Transverse colon (tissue), 4 donors: ENCODE measurements at regions of chr5 and their contacts with region 1.

Region 1: DNA sequence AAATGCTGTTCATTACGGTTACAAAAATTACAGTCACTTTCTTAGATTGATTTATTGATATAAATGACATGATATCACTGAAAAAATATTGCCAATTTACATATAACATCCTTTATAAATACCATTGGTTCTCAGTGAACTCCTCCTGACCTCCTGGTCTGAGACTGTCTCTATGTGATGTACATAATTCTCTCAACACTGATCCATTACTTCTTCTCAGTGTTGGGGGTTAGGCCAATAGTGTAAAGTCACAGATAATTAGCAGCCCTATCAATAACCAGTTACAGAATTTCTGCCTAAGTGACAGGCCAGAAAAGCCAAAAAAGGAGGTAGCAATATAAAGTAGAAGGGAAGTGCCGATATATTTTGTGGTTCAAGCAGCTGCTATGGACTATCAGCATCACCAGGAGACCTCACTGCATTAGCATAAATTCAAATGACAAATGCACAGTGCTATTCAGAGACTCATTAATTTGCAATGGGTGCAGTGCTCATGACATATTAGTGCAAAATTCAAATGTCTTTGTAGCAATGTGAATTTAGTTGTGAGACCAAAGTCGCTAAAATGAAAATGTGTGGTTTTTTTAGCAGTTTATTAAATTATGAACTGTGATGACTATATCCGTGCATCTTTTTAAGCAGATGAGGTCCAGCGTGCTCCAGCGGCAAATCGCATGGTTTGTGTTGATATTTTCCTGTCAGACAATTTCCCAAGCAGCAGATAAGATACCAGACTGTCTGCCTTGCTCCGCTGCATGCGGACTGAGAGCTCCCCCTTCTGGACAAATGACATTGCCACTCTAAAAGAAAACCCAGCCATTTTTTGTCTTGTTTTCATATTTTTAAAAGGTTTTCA is 144.6 kb downstream of the CETN3 start:
- DNase-seq: peak; percentile 58
- H3K4me3 ChIP-seq: no peak overlapping the region
- H3K27ac ChIP-seq: no peak overlapping the region
- H3K4me1 ChIP-seq: no peaks in the 10 kb centered on the region
- H3K27me3 ChIP-seq: no peaks in the 10 kb centered on the region
- CTCF ChIP-seq: peak; percentile 78 to 93 (median 86)
- EP300 ChIP-seq: no peak
- POLR2A ChIP-seq: no peak

Region 2: DNA sequence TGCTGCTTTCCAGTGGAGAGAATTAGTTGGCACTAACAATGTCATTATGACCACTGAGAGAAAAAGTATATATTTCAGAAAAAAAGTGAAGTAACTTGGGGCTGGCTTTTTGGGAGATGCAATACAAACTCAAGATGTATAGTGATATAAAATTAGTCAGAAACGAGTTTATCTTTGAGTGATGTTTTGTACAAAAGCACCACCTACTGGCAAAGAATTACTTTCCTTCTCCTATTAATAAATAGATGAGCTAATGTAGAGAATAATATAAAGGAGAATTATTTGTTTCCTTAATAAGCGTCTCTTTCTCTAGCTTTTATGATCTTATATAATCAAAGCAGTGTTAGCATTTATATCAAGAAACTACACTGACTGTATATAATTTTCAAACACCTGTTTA is 1540.7 kb before region 1 on chr5:
- in situ Hi-C with region 1: loop called in 3 of 4 experiments (anchors 10 to 25 kb)
- intact Hi-C with region 1: loop called (anchors 5 kb)
- DNase-seq: no peak
- H3K4me3 ChIP-seq: no peak overlapping the region
- H3K27ac ChIP-seq: no peak overlapping the region
- H3K4me1 ChIP-seq: peaks cover 0 to 7% (median 0%) of the 10 kb centered on the region in 4 donors
- H3K27me3 ChIP-seq: no peaks in the 10 kb centered on the region
- CTCF ChIP-seq: no peak
- EP300 ChIP-seq: no peak
- POLR2A ChIP-seq: no peak

Region 3: GRCh38 chr5:88729084-88729828 is 1535.7 kb before region 1 on chr5:
- in situ Hi-C with region 1: loop called in 3 of 4 experiments (anchors 10 to 25 kb)
- intact Hi-C with region 1: loop called (anchors 5 kb)
- DNase-seq: peak; percentile 77
- H3K4me3 ChIP-seq: no peak overlapping the region
- H3K27ac ChIP-seq: no peak overlapping the region
- H3K4me1 ChIP-seq: peaks cover 0 to 17% (median 0%) of the 10 kb centered on the region in 4 donors
- H3K27me3 ChIP-seq: no peaks in the 10 kb centered on the region
- CTCF ChIP-seq: peak; percentile 75 to 86 (median 79)
- EP300 ChIP-seq: no peak
- POLR2A ChIP-seq: no peak

Region 4: DNA sequence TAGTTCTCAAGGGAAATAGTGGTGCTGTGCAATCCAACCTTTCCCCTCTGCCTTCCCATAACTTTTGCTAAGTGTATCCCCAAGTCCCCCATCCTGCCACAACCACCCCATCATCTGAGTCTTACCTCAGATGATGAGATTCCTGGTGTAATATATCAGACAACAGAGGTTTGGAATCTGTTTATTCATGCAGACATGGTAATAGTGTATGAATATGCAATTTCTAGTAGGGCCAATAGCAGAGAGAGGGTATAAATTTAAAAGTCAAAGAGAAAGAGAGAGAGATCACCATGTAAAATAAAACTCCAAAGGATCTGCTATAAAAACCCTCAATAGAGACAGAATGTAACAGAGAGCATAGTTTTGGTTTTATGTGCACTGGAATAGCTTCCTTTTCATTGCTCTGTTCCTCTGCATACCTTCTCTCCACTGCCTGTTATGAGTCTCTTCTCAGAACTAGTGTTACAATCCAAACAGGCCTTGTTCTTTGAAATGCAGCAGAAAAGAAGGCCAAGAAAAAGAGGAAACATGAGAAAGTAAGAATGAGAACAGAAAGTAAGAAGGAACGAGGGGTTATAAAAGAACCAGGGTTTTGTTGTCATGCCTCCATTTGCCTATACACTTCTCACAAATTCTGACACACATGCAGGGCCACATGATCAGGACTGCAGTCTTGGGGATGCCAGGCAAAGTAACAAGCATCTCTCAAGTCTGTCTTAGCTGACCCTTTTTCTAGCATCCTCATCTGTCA is 133.4 kb before region 1 on chr5:
- in situ Hi-C with region 1: loop called in 1 of 4 experiments (anchors 10 kb)
- intact Hi-C with region 1: no loop called
- DNase-seq: no peak
- H3K4me3 ChIP-seq: no peak overlapping the region
- H3K27ac ChIP-seq: peak overlapping the region in 3 of 4 donors; percentile 22 to 50 (median 32)
- H3K4me1 ChIP-seq: peaks cover 0 to 3% (median 0%) of the 10 kb centered on the region in 4 donors
- H3K27me3 ChIP-seq: no peaks in the 10 kb centered on the region
- CTCF ChIP-seq: no peak
- EP300 ChIP-seq: no peak
- POLR2A ChIP-seq: no peak